H1 (cell line): ENCODE measurements at regions of chr2 and their contacts with region 1.

Region 1: DNA sequence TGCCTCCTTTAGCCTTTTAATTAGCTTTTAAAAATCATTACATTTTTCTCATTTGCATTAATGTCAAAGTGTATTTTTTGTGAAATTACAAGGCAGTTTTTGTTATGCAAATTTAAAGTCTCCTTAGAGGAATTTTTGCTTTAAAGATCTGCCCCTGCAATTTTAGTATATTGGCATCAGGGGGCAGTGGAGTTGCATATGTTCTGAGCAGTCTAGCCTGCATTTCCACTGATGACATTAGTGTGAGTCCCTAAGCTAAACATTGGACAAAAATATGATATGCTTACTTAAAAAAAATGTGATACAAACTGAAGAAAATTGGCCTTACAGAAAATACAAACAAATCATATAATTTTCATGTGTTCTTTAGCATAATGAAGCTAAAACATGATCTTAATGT is 426.5 kb downstream of the SLC4A3 start:
- DNase-seq: no peak
- H3K4me3 ChIP-seq: no peak overlapping the region
- H3K27ac ChIP-seq: no peak overlapping the region
- H3K4me1 ChIP-seq: no peaks in the 10 kb centered on the region
- H3K27me3 ChIP-seq: no peaks in the 10 kb centered on the region
- CTCF ChIP-seq: peak in 1 of 3 experiments; percentile 48; a peak in 1 of 4 replicates
- EP300 ChIP-seq: no peak
- POLR2A ChIP-seq: no peak
- RAD21 ChIP-seq: peak; percentile 55 to 64

Region 2: DNA sequence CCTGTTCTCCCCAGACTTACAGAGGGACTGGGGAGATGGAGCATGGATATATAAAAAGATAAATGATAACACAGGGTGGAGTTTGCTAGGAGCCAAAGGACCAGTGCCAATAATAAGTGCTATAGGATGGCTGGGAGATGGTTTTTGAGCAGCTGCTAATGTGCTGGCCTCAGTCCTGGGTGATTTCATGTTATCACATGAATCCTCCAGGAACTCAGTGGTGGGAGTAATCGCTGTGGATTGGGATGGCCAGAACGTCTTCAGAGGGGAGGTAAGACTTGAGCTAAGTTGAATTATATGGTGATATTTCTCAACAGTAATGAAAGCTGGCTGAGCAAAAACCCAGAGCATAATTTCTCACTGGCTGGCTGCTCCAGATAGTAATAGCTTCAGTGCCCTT is 14.9 kb after region 1 on chr2:
- CTCF ChIA-PET with region 1: interaction called, 13 read pairs
- POLR2A ChIA-PET with region 1: no interaction called
- DNase-seq: no peak
- H3K4me3 ChIP-seq: no peak overlapping the region
- H3K27ac ChIP-seq: no peak overlapping the region
- H3K4me1 ChIP-seq: peaks cover 0 to 4% (median 0%) of the 10 kb centered on the region in 4 experiments; a peak in 1 of 7 replicates
- H3K27me3 ChIP-seq: no peaks in the 10 kb centered on the region
- CTCF ChIP-seq: no peak
- EP300 ChIP-seq: no peak
- POLR2A ChIP-seq: no peak
- RAD21 ChIP-seq: no peak

Region 3: GRCh38 chr2:220076738-220077137 is 22.8 kb after region 1 on chr2:
- CTCF ChIA-PET with region 1: interaction called, 11 read pairs
- POLR2A ChIA-PET with region 1: no interaction called
- DNase-seq: no peak
- H3K4me3 ChIP-seq: no peak overlapping the region
- H3K27ac ChIP-seq: no peak overlapping the region
- H3K4me1 ChIP-seq: peaks cover 0 to 3% (median 1%) of the 10 kb centered on the region in 4 experiments; a peak in 5 of 7 replicates
- H3K27me3 ChIP-seq: no peaks in the 10 kb centered on the region
- CTCF ChIP-seq: peak in 2 of 3 experiments; percentile 11 to 36; a peak in 1 of 4 replicates
- EP300 ChIP-seq: no peak
- POLR2A ChIP-seq: no peak
- RAD21 ChIP-seq: peak; percentile 47 to 57